Sigmoid colon (tissue), 7 donors: ENCODE measurements at regions of chrX and their contacts with region 1.

Region 1: DNA sequence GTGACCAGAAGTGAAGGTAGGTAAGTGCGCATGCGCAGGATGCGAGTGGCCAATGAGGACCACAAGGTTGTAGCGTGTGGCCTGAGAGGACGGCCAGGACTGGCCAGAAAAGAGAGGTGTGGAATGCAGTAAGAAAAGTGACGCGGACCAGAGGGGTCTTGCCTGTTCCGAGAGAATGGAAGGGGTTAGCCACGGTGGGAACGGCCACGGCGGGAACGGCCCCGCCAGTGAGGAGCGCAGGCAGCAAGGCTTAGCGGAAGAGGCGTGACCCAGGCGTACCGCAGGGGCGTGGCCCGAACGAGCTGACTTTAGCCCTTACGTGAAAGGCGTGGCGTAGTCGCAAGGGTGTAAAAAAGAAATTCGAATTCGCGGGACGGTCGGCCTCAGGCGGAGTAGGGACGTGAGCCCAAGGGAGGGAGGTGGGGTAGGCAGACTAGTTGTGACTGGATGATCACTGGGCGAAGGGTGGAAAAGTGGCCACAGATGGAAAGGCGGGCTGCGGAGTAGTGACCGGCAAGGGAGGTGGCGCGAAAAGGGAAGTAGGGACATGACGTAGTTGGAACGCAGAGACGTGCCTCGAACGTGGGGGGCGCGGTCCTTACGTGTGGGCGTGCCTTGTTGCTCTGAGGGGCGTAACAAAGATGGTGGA is 10.4 kb upstream of the CLTRN start:
- DNase-seq: peak; percentile 99
- H3K4me3 ChIP-seq: peak overlapping the region; percentile 62 to 81 (median 64)
- H3K27ac ChIP-seq: peak overlapping the region; percentile 92 to 99 (median 96)
- H3K4me1 ChIP-seq: peaks cover 0 to 29% (median 6%) of the 10 kb centered on the region in 4 donors
- H3K27me3 ChIP-seq: no peaks in the 10 kb centered on the region
- CTCF ChIP-seq: no peak
- EP300 ChIP-seq: no peak
- POLR2A ChIP-seq: peak; percentile 25 to 28

Region 2: DNA sequence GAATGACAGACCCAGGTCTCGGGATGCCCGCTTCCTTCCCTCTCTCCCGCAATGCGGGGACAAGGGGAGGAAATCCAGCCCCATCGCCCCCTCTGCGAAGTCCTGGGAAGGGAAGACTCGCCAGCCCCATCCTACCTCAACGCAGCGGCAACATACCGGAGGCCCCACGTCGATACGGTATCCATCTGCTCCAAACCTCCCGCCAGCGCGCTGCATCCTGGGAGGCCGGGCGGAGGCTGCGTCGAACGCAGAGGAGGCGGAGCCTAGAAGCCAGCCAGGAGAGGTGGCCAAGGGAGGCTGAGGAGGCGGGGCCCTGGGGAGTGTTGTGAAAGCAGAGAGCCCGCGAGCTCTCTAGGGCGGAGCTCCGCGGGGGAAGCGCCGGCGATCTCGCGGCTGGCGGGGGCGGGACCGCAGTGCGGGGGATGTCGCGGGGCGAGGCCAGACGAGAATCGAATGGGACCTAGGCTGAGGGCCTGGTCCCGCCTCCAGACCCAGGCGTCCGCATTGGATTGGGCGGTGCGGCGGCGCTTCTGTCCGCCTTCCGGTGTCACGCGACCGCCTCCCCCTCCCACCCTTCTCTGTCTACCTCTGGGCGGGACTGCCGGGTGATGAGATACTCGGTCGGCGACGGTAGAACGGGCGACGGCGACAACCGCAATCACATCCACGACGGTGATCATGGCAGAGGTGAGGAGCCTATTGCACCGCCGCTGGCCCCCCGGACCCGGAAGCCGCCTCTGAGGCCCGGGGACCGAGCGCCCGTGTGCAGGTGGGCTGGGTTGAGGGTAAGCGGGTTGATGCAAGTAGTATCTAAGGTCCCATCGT is 801.9 kb before region 1 on chrX and contains the starts of genes FANCB and MOSPD2:
- intact Hi-C with region 1: loop called (anchors 5 kb)
- DNase-seq: peak; percentile 96
- H3K4me3 ChIP-seq: peak within 1 kb of the TSS; percentile 69 to 71 (median 71)
- H3K27ac ChIP-seq: peak within 1 kb of the TSS; percentile 83 to 84 (median 84)
- H3K4me1 ChIP-seq: peaks cover 0 to 8% (median 3%) of the 10 kb centered on the region in 4 donors
- H3K27me3 ChIP-seq: no peaks in the 10 kb centered on the region
- CTCF ChIP-seq: no peak
- EP300 ChIP-seq: no peak
- POLR2A ChIP-seq: no peak
- total RNA-seq, gene FANCB: 1.4 to 4.4 (median 1.8) TPM
- total RNA-seq, gene MOSPD2: 14.3 to 22.1 (median 20.4) TPM

Region 3: DNA sequence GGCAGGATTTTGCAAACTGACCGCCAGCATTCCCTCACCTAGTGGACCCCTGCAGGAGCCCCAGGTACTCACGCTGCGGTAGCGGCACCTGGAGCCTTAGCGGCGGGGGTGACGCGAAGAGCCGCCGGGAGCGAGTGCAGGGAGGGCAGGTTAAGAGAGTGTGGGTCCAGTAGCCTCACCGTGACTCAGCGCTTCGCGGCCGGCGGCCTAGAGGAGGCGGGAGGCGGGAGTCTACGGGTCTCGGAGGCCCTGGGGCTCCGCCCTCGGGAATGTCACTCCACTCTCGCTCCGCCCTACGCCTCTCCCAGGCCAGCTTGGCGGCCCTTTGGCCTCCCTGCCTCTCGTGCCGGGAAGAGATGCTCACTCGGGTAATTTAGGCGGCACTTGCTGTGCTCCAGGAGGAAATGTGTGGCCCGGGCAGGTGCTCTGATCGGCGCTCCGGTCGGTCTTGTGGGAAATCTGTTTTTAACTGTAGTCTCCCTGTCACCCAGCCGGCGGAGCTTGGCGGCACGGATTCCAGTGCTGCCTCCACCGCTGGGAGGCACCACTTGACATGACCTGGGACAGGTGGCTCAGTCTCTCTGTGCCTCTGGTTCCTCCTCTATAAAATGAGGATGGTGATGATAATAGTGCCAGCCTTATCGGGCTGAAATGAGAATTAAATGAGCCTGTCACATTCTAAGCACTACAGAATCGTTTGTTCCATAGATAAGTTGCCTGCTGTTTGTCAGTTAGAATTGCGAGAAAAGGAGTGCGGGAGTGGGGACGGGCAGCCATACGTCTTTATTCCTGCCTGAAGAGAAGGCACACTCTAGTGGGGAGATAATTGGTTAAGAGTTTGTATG is 181.6 kb before region 1 on chrX and contains the start of gene PIR:
- intact Hi-C with region 1: loop called (anchors 2 kb)
- DNase-seq: peak; percentile 92
- H3K4me3 ChIP-seq: peak within 1 kb of the TSS; percentile 34 to 57 (median 54)
- H3K27ac ChIP-seq: peak within 1 kb of the TSS; percentile 60 to 71 (median 66)
- H3K4me1 ChIP-seq: peaks cover 0 to 11% (median 3%) of the 10 kb centered on the region in 4 donors
- H3K27me3 ChIP-seq: no peaks in the 10 kb centered on the region
- CTCF ChIP-seq: peak in 2 of 4 experiments; percentile 6 to 18
- EP300 ChIP-seq: no peak
- POLR2A ChIP-seq: no peak
- total RNA-seq, gene PIR: 4.5 to 22.1 (median 15.8) TPM

Region 4: GRCh38 chrX:15854712-15855567 is 180.0 kb after region 1 on chrX and contains the start of gene AP1S2:
- intact Hi-C with region 1: loop called (anchors 5 kb)
- DNase-seq: peak; percentile 97
- H3K4me3 ChIP-seq: peak within 1 kb of the TSS; percentile 44 to 81 (median 76)
- H3K27ac ChIP-seq: peak within 1 kb of the TSS; percentile 83 to 95 (median 89)
- H3K4me1 ChIP-seq: peaks cover 0 to 16% (median 3%) of the 10 kb centered on the region in 4 donors
- H3K27me3 ChIP-seq: peaks cover 0 to 3% (median 0%) of the 10 kb centered on the region in 3 donors
- CTCF ChIP-seq: no peak
- EP300 ChIP-seq: no peak
- POLR2A ChIP-seq: peak; percentile 24 to 25
- total RNA-seq, gene AP1S2: 71.6 to 156 (median 93.5) TPM

Region 5: GRCh38 chrX:16786139-16786790 is 1111.3 kb after region 1 on chrX and contains the start of gene TXLNG:
- intact Hi-C with region 1: loop called (anchors 10 kb)
- DNase-seq: peak; percentile 100
- H3K4me3 ChIP-seq: peak within 1 kb of the TSS; percentile 73 to 85 (median 78)
- H3K27ac ChIP-seq: peak within 1 kb of the TSS; percentile 87 to 93 (median 90)
- H3K4me1 ChIP-seq: peaks cover 0 to 21% (median 7%) of the 10 kb centered on the region in 4 donors
- H3K27me3 ChIP-seq: peaks cover 0 to 3% (median 0%) of the 10 kb centered on the region in 3 donors
- CTCF ChIP-seq: no peak
- EP300 ChIP-seq: no peak
- POLR2A ChIP-seq: peak; percentile 67 to 81
- total RNA-seq, gene TXLNG: 11.5 to 20.1 (median 13.2) TPM